ENCODE measurements at regions of chr7 and their contacts with region 1.

Region 1: GRCh38 chr7:10939911-10940703 is 33.6 kb upstream of the PHF14 start:
- DNase-seq: peak; percentile 68 to 94
- H3K4me3 ChIP-seq: peak overlapping the region; percentile 76 to 83
- H3K27ac ChIP-seq: peak overlapping the region; percentile 88 to 96
- H3K4me1 ChIP-seq: peaks cover 0 to 23% of the 10 kb centered on the region in 2 donors
- H3K27me3 ChIP-seq: no peaks in the 10 kb centered on the region
- CTCF ChIP-seq: no peak

Region 2: DNA sequence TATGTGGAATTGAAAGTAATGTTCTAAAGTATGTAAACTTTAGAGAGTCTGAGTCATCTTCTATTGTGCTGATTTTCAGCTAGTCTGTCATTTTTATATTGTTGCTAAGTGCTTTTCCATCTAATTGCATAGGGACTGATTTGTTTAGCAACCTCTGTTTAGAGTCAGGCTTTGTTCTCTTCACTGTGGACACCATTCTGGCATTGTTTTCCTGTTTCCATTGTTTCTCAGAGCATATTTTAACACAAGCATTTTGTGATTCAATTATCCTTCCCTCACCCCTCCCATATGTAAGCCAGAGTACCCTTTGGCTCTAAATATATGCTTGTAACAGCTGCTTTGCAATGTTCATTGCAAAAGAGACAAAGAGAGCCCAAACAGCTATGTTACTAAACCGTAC is 714.8 kb before region 1 on chr7:
- intact Hi-C with region 1: no loop called
- DNase-seq: no peak
- H3K4me3 ChIP-seq: no peak overlapping the region
- H3K27ac ChIP-seq: no peak overlapping the region
- H3K4me1 ChIP-seq: no peaks in the 10 kb centered on the region
- H3K27me3 ChIP-seq: no peaks in the 10 kb centered on the region
- CTCF ChIP-seq: no peak

Region 3: DNA sequence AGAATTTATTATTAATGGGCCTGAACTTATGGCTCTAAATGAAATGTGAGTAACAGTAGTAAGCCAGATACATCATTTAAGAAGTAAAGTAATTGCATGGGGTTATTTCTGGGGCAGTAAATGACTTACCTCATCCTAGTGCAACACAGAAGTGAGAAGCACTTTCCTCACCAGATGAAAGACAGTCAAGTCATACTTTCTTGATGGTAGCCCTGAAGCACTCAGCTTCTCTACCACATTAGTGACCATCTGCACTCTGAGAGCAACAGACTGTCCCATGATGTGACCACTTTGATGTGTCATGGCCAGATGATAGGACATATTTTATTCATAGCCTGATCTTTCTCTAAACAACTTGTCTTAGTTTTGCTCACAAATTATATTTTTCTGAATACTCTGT is 336.0 kb before region 1 on chr7:
- intact Hi-C with region 1: no loop called
- DNase-seq: no peak
- H3K4me3 ChIP-seq: no peak overlapping the region
- H3K27ac ChIP-seq: no peak overlapping the region
- H3K4me1 ChIP-seq: no peaks in the 10 kb centered on the region
- H3K27me3 ChIP-seq: no peaks in the 10 kb centered on the region
- CTCF ChIP-seq: no peak

Region 4: DNA sequence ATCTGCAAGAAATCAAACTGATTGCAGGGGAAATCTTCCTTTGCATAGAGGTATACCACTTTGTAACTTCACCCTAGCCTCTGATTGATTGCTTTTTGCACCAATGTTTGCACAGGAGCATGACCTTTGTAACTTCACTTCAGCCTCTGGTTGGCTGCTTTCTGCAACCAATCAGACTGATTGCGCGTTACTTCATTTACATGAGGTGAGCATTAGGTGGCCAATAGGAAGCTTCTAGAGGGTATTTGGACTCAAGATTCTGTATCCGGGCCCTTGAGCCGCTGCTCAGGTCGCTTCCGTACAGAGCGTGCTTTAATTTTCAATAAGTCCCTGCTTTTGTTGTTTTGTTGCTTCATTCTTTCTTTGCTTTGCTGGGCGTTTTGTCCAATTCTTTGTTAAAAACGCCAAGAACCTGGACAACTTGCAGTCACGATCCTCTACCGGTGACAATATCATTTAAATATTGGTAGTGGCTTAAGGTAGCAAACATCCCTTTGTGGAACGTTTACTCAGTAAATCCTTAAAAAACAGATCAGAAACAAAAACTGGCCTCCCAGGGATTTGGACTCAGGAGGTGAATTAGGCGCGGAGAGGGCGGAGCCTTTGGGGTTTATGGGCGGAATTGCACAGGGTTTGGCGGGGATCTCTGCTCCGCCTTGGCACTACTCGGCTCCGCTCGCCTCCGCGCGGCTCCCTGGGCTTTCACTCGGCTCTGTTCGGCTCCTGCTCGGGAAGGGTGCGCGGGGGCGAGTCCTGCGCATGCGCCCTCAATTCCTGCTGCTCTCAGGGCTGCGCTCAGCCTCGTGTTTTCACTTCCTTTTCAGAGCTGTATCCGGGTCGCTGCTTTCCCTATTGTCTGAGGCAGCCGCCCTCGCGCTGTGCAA is 33.2 kb after region 1 on chr7 and contains the start of gene PHF14:
- intact Hi-C with region 1: loop called (anchors 1 kb)
- DNase-seq: peak; percentile 91 to 98
- H3K4me3 ChIP-seq: peak within 1 kb of the TSS; percentile 78 to 92
- H3K27ac ChIP-seq: peak within 1 kb of the TSS; percentile 73 to 74
- H3K4me1 ChIP-seq: peaks cover 0 to 11% of the 10 kb centered on the region in 2 donors
- H3K27me3 ChIP-seq: no peaks in the 10 kb centered on the region
- CTCF ChIP-seq: no peak
- total RNA-seq, gene PHF14: 41.8 TPM

Region 5: DNA sequence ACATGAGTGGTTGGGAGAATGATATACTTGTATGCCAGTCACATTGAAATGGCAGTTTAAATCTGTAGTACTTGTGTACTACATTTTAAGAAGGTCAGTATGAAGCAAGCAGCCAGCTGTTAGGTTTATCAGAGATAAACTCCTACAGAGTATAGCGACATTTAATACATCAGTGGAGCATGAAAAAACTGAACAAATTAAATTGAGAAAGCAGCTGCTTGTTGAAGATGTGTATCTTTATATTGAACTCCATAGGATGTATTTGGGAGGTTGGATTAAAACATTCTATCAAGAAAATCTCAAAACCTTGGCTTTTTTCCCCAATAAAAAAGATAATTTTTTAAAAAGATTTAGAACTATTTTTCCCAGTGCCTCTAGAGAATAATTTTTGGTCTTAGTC is 81.4 kb after region 1 on chr7:
- intact Hi-C with region 1: no loop called
- DNase-seq: no peak
- H3K4me3 ChIP-seq: no peak overlapping the region
- H3K27ac ChIP-seq: no peak overlapping the region
- H3K4me1 ChIP-seq: no peaks in the 10 kb centered on the region
- H3K27me3 ChIP-seq: no peaks in the 10 kb centered on the region
- CTCF ChIP-seq: no peak

Region 6: GRCh38 chr7:12211054-12211710 is 1271.1 kb after region 1 on chr7 and contains the start of gene TMEM106B:
- intact Hi-C with region 1: loop called (anchors 5 kb)
- DNase-seq: peak; percentile 86 to 98
- H3K4me3 ChIP-seq: peak within 1 kb of the TSS; percentile 73 to 88
- H3K27ac ChIP-seq: peak within 1 kb of the TSS; percentile 84 to 90
- H3K4me1 ChIP-seq: peaks cover 0 to 10% of the 10 kb centered on the region in 2 donors
- H3K27me3 ChIP-seq: no peaks in the 10 kb centered on the region
- CTCF ChIP-seq: no peak
- total RNA-seq, gene TMEM106B: 21.3 TPM